A549 (cell line): ENCODE measurements at regions of chr7 and their contacts with region 1.

Region 1: DNA sequence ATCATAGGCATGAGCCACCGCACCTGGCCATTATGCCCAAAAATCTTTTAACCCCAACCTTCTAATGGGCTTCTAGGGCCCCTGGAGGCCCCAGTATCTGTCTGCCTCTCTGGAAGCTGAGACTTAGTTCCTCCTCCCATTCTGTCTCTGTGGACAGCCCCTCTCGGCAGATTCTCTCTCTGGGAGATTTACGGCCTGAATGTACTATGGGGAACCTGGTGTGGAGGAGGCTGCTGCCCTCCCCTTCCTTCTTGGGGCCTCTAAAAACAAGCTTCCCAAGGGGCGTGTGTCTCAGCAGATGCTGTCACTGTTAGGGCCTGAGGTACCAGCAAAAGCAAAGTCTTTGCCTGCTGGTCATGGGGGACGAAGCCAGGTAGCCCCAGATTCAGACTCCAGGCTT is 35.8 kb upstream of the PRKAR1B start:
- DNase-seq: no peak
- ATAC-seq: no peak
- H3K4me3 ChIP-seq: no peak overlapping the region
- H3K27ac ChIP-seq: no peak overlapping the region
- H3K4me1 ChIP-seq: no peaks in the 10 kb centered on the region
- CTCF ChIP-seq: no peak
- EP300 ChIP-seq: no peak
- POLR2A ChIP-seq: no peak
- RAD21 ChIP-seq: no peak

Region 2: GRCh38 chr7:738755-739454 is 24.0 kb before region 1 on chr7:
- CTCF ChIA-PET with region 1: no interaction called
- POLR2A ChIA-PET with region 1: no interaction called
- DNase-seq: no peak
- ATAC-seq: no peak
- H3K4me3 ChIP-seq: no peak overlapping the region
- H3K27ac ChIP-seq: no peak overlapping the region
- H3K4me1 ChIP-seq: no peaks in the 10 kb centered on the region
- CTCF ChIP-seq: no peak
- EP300 ChIP-seq: no peak
- POLR2A ChIP-seq: no peak
- RAD21 ChIP-seq: no peak

Region 3: DNA sequence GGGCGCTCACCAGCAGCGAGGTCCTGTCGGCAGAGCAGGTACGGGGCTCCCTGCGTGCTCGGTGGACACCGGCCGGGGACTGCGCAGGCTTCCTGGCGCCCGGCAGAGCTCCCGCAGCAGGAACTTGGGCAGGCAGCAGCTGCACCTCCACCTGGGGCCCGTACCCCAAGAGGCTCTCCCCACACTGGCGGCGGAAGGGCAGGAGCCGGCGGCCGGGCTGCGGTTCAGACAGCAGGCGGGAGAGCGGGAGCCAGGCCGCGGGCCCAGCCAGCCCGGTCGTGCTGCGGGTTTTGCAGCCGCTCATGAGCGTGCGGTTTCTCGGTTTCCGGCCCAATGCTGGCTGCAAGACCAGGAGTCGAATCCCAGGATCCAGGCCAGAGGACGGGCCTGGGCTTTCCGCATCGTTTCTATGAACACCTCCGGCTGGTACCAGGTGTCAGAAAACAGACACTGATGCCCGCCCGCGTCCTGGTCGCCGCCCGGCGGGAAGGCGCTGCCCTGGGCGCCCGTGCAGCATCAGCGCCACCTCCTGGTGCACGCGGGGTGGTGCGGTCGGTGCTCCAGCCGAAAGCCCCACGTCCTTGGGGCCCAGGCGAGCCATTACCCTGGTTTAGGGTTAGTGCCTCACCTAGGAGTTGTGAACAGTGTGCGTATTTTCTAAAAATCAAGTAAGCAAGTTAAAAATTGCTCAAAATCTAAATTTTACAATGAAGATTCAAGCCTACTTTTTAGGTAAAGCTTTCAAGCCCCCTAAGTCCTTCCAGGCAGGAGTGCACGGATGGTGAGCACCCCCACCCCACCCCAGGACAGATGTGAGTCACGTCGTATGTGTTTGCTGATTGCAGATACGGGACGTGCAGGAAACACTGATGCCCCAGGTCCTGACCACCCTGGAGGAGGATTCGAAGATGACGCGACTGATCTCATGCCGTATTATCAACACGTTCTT is 11.6 kb after region 1 on chr7:
- CTCF ChIA-PET with region 1: interaction called, 19 read pairs
- POLR2A ChIA-PET with region 1: no interaction called
- DNase-seq: peak; percentile 52 to 53
- ATAC-seq: peak; percentile 72 to 87; a peak in 5 of 6 replicates
- H3K4me3 ChIP-seq: no peak overlapping the region
- H3K27ac ChIP-seq: no peak overlapping the region
- H3K4me1 ChIP-seq: peaks cover 9% of the 10 kb centered on the region; the same call in 2 of the 3 replicates
- CTCF ChIP-seq: peak; percentile 80
- EP300 ChIP-seq: no peak
- POLR2A ChIP-seq: no peak
- RAD21 ChIP-seq: peak; percentile 76 to 81

Region 4: DNA sequence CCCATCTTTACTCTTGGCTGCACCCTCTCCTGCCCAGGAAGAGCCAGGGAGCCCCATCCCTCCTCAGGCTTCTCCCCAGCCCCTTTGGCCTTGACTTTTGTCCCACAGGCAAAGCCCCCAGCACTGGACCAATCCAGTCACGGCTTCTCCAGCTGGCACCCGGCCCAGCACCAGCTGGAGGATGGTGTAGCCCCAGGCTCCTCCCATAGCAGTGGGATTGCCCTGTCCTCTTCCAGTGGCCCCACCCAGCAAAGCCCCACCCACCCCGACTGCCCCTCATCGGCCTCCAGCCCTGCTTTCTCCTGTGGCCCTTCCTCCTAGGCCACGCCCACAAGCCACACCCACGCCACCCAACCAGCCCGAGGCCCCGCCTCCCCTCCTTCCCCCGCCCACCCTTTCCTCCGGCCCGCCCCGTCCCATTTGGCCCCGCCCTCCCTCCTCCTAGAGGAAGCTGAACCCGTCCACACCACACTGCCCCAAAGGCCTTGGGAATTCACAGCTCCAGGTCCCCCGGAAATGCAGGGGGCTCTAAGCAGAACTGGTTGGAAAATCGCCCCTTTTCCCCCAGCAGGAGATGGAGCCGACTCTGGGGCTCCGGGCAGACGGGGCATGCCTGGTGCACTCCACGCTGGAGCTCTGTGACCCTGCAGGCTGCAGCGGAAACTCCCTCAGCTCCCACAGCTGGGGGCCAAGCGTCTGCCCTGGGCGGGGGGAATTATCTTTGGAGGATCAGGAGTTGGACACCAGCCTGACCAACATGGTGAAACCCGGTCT is 138.7 kb after region 1 on chr7:
- CTCF ChIA-PET with region 1: no interaction called
- POLR2A ChIA-PET with region 1: no interaction called
- DNase-seq: peak; percentile 79 to 87
- ATAC-seq: peak; percentile 54 to 85
- H3K4me3 ChIP-seq: no peak overlapping the region
- H3K27ac ChIP-seq: peak overlapping the region; percentile 40 to 61; a peak in 3 of 6 replicates
- H3K4me1 ChIP-seq: peaks cover 23% of the 10 kb centered on the region
- CTCF ChIP-seq: no peak
- EP300 ChIP-seq: no peak
- POLR2A ChIP-seq: no peak
- RAD21 ChIP-seq: no peak